ENCODE measurements at regions of chr1 and their contacts with region 1.

Region 1: DNA sequence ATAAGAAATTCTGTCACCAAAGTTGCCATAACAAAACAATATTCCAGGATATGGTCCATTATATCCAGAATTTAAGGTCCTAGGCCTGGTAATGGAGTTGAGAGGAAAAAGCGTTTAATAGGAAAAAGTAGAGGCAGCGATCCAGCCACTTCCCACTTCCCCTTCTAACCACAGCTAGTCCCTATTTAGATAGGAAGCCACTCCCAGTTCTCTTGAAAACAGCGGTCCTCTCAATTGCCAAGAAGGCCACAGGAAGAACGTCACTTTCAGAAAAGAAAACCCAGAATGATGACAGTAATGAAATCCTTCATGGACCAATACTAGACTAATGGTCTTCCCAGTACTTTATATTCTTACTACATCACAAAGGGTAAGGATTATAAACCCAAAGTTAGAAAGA is 38.6 kb downstream of the ABL2 start:
- DNase-seq: no peak

Region 2: GRCh38 chr1:179121159-179121938 is 69.5 kb before region 1 on chr1:
- intact Hi-C with region 1: loop called (anchors 1 kb)
- DNase-seq: no peak

Region 3: DNA sequence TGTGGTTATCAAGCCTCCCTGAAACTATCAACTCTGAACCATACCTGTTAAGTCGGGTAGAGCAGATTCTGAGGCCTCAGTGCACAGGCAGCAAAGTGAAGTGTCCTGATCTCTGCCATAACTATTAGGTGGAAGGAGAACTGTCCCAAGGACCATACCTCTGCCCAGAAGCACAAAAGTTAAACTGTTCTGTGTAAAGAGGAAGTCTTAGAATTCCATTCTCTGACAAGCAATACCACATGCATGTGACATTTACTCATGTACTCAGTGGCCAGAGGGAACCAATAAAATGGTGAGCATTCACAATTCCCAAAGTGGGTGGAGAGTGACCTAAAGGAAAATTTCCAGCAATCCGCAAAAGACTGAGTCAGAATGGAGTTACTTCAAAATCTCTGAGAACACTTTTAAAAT is 48.0 kb before region 1 on chr1:
- intact Hi-C with region 1: loop called (anchors 5 kb)
- DNase-seq: no peak